Cardiac septum (tissue), 1 donor: ENCODE measurements at regions of chrX and their contacts with region 1.

Region 1: GRCh38 chrX:47836164-47837072 is at the start of gene ZNF81:
- DNase-seq: peak; percentile 97
- total RNA-seq, gene ZNF81: 11.7 TPM

Region 2: GRCh38 chrX:48021026-48021900 is 184.8 kb after region 1 on chrX:
- intact Hi-C with region 1: loop called (anchors 2 kb)
- DNase-seq: peak; percentile 86

Region 3: DNA sequence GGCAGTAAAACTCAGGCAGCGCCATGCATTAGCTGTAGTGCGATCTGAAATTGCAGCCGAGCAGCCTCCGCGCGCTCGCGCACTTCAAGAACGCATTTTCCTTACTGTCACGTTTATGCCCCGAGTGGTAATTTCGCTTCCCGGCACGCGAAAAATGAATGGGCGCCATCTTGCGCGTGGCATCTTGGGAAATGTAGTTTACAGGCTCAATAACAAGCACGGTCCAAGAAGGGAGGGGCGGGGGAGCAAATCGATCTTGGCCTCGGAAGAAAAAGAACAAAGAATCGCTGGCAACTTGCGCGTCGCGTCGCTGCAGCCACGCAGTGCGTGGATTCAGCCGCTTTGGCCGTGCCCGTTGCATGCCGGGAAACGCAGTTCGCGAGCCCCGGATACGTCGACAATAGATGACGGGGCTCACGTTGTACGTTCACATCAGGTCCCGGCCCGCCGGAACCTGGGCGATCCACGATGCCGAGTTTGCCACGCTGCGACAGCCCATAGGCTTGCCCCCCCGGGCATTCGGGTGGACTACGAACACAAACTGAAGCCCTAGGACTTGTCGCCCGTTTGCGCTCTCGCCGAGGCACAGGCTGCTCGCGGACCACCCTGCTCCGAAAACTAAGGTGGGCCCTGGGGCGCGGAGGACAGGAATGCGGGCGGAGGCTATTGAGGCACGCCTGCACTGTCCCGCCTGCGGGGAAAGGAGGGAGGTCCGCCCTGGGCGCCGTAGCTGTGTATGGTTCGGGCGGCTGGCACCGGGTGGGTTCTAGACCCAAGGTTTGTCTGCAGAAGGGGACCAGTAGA is 639.6 kb after region 1 on chrX and contains the start of gene FTSJ1:
- intact Hi-C with region 1: loop called (anchors 10 kb)
- DNase-seq: peak; percentile 90
- total RNA-seq, gene FTSJ1: 18.8 TPM